ENCODE measurements at regions of chr2 and their contacts with region 1.

Region 1: DNA sequence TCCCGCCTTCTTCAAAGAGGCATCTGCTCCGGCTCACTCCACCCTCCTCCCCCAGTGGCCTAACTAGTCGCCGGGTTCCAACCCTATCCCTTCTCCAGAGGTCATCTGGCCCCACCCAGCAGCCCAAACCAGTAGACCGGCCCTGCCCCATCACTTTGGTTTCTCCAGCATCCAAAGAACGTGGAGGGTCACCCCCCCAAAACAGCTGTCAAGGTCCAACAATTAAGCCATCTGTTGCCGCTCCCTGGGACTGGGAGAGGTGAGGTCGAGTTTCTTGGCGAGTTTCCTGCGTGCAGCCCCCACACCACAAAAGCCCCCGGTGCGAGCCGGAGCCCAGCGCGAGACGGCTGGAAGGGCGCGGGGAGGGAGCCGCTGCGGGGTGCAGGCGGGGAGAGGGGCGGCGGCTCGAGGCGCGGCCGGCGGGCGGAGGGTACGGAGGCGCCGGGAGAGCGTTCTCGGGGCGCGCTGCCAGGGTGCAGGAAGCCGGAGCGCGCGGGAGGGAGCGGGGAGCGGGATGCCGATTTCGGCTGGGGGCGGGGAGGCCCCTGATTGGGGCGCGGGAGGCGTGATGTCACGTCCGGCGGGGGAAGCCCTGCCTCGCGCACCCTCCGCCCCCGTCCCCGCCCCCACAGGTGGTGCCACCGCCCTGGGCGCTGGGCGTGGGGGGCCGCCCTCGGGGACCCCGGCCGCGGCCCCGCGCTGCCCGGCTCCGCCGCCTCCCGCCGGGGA is 571 bp upstream of the GPC1 start:
- DNase-seq: peak; percentile 92
- CTCF ChIP-seq: no peak

Region 2: DNA sequence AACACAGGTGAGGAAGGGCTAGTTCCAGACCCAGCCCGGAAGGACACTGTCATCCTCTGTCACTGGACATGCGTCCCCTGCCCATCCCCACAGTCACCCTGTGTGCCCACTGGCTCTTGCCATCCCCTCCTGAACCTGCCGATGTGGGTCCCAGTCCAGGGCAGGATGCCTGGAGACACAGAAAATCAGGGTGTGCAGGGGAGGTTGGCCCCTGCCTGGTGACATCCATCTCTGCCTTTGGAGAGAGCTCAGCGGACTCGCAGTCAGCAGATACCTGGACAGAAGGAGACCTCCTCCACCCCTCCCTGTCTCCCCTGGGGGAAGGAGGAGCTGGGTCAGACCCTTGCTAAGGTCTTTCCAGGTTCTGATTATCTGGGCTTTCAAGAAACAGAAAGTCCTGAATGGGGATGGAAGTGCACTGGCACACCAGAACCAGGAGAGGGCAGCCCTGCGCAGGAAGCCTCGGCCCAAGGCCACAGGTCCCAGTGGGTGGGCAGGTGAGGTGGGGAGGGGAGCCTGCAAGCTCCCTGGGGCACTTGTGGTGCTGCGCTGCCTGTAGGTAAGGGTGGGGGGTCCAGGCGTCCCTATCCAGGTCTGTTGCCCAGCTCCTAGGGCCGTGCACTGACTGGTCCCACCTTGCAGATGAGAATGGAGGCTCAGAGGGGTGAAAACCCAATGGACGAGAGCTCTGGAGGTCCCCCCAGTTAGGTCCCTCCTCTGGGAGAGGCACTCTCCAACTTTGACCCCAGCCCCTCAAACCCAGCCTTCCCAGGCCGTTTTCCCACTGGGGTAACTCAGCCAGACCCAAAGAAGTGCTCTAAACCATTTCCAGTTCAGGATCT is 284.7 kb before region 1 on chr2:
- in situ Hi-C with region 1: loop called (anchors 25 kb)
- DNase-seq: peak; percentile 85
- CTCF ChIP-seq: peak; percentile 61

Region 3: GRCh38 chr2:240232961-240233893 is 201.7 kb before region 1 on chr2:
- in situ Hi-C with region 1: loop called (anchors 25 kb)
- DNase-seq: peak; percentile 89
- CTCF ChIP-seq: peak; percentile 51

Region 4: DNA sequence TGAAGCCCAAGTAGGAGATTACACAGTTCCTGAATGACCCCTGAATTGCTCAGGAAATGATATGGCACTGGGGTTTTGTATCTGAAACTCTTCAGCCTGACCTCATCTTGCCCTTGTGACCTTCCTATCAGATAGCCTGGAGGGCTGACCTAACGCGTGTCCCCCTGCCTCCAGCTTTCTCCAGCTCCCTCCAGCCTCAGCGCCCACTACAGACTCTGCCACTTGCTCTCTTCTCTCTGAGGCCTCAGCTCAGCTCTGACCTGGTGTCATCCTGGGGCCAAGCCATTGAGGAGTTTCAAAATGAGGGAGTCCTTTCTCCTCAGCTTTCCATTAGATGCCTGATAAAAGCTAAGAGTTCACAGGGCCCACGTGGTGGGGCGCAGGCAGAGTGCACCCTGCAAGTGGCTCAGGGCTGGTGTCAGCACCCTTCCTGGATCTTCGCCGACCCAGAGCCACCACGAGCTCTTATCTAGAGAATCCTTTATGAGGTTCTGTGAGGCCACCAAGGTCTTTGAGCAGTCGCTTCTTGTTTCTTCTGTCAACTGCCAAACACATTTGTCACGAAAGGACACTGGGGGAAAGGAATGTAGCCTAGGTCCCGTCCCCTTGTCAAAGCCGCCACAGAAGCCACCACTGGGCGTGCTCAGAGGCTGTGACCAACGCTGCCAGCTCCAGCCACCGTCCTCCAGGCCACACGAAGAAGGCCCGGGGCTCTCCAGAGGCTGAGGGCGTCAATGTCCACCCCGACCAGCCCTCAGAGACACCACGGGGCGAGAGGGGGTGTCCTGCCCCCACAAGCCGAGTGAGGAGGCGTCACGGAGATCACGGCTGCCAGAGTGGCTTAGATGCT is 130.8 kb before region 1 on chr2:
- in situ Hi-C with region 1: no loop called
- DNase-seq: no peak
- CTCF ChIP-seq: no peak

Region 5: DNA sequence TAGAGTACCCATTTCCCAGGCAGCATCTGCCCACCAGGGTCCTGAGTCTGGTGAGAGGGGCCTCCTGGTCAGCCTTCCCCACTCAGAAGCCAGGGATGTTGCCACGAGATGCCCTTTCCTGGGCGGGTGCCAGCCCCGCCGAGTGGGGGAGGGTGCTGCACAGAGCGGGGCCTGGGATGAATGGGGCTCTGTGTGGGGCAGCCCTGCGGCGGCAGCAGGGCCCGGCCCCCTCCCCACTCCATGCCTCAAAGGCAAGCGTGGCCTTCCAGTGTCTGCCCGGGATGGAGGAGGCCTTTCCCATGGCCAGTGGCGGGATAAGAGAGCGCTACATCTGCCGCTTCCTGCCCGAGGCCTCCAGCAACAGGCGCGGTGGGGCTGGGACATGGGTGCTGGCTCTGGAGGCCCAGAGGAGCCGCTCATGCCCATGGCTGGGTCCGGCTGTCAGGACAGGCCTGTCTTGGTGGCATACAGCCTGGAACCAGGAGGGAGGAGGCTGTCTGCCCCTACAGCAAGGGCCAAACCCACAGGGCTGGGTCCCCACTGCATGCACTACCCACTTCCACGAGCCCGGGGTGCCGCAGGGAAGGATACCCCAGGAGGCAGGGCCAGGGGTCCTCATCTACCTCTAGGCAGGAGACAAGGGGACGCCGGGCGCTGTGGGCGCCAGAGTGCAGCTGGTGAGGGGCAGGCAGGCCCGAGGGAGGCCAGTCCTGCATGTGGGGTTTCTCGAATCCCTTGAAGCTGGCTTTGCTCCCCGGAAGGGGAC is 94.7 kb before region 1 on chr2:
- in situ Hi-C with region 1: no loop called
- DNase-seq: no peak
- CTCF ChIP-seq: no peak

Region 6: DNA sequence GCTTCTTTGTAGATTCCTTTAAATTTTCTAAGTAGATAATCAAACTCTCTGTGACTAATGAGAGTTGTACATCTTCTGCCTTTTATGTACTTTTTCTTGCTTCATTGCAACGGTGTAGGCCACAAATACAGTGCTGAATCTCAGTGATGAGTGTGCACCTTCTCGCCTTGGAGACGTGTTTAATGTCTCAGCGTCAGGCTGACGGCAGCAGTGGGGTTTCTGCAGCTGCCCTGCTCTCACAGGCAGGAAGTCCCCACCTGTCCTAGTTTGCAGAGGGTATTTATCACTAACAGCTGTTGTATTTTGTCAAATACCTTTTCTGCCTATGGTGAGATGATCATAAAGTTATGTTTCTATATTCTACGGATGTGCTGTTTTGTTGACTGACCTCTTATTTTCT is 447.0 kb after region 1 on chr2:
- in situ Hi-C with region 1: no loop called
- DNase-seq: no peak
- CTCF ChIP-seq: no peak

Region 7: GRCh38 chr2:240913810-240914644 is 479.1 kb after region 1 on chr2:
- in situ Hi-C with region 1: no loop called
- DNase-seq: peak; percentile 87
- CTCF ChIP-seq: peak; percentile 78